ENCODE measurements at regions of chr1 and their contacts with region 1.

Region 1: GRCh38 chr1:35564037-35564883 is 6.7 kb downstream of the NCDN start:
- DNase-seq: peak; percentile 65 to 89
- ATAC-seq: peak; percentile 73

Region 2: GRCh38 chr1:35451125-35451528 is 113.1 kb before region 1 on chr1:
- intact Hi-C with region 1: loop called (anchors 5 to 10 kb)
- DNase-seq: peak; percentile 59 to 87
- ATAC-seq: peak; percentile 89

Region 3: DNA sequence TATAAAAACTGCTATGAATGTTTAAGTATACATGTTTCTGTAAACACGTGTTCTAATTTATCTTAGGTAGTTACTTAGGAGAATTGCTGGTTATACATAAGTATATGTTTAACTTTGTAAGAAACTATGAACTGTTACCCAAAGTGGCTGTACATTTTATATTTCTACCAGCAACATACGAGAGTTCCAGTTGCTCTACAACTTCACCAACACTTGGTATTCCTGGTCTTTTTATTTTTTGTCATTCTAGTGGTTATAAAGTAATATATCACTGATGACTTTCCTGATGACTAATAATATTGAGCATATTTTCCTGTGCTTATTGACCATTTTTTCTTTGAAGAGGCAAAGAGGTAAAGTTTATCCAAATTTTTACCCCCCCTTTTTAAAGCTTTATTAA is 83.0 kb before region 1 on chr1:
- intact Hi-C with region 1: no loop called
- DNase-seq: no peak
- ATAC-seq: no peak

Region 4: DNA sequence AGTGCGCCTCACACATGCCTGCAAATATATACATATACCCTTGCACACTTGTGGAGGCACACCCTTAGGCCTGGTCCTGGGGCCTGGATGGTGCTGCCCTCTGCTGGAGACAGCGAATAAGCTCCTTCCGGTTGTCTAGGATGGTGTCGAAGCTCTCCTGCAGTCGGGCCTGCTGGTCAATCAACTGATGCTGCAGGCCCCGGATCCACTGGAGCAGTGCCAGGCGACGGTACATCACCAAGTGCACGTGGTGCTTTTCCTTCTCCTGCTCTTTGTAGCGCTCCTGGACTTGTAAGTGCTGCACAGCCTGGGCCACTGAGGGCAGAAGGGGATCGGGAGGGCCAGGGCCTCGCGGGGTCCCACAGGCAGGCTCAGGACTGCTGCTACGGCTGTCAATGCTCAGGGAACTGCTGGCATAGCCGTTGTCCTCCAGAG is 151.3 kb after region 1 on chr1:
- intact Hi-C with region 1: loop called in 1 of 2 experiments (anchors 10 kb)
- DNase-seq: peak; percentile 68 to 86
- ATAC-seq: peak; percentile 85

Region 5: GRCh38 chr1:35726450-35727433 is 162.5 kb after region 1 on chr1:
- intact Hi-C with region 1: loop called in 1 of 2 experiments (anchors 5 kb)
- DNase-seq: peak in 1 of 2 donors; percentile 59
- ATAC-seq: peak; percentile 84

Region 6: DNA sequence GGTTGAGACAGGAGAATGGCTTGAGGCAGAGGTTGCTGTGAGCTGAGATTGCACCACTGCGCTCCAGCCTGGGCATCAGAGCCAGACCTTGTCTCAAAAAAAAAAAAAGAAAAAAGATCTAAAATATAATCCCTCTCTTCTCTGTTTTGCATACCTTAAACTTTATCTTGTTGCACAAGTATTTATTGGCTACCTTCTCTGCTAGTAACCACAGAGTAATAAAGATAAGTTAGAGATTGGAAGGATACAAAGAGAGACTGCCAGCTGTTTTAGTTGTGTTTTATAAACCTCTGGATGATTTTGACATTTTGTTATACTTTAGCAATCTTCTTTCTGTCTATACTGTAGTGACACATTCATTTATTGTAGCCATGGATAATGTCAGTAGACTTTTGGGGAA is 394.3 kb after region 1 on chr1:
- intact Hi-C with region 1: no loop called
- DNase-seq: no peak
- ATAC-seq: peak; percentile 74

Measured in left colon (tissue), 2 donors.